ENCODE measurements at regions of chr10 and their contacts with region 1.

Region 1: GRCh38 chr10:54194806-54195205 is 606.2 kb downstream of the PCDH15 start:
- DNase-seq: no peak
- H3K4me3 Mint-ChIP-seq: no peak overlapping the region
- H3K27ac Mint-ChIP-seq: no peak overlapping the region
- H3K4me1 Mint-ChIP-seq: no peaks in the 10 kb centered on the region
- H3K27me3 Mint-ChIP-seq: no peaks in the 10 kb centered on the region

Region 2: DNA sequence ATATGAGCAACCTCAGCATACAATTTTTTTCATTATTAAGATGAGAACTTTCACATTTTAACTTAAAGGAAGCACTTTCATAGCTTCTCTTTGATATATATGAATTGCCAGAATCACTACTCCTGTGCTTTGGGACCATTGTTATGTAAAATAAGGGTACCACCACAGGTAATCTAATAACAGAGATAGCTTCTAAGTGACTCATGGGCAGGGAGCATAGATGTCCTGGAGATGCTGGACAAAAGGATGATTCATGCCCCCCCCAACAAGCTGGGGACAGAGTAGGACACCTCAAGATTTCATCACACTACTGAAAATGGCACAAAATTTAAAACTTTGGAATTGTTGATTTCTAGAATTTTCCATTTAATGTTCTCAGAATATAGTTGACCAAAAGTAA is 34.9 kb before region 1 on chr10:
- CTCF ChIA-PET with region 1: no interaction called
- POLR2A ChIA-PET with region 1: interaction called, 13 read pairs
- DNase-seq: no peak
- H3K4me3 Mint-ChIP-seq: no peak overlapping the region
- H3K27ac Mint-ChIP-seq: no peak overlapping the region
- H3K4me1 Mint-ChIP-seq: no peaks in the 10 kb centered on the region
- H3K27me3 Mint-ChIP-seq: no peaks in the 10 kb centered on the region